ENCODE measurements at regions of chr15 and their contacts with region 1.

Region 1: DNA sequence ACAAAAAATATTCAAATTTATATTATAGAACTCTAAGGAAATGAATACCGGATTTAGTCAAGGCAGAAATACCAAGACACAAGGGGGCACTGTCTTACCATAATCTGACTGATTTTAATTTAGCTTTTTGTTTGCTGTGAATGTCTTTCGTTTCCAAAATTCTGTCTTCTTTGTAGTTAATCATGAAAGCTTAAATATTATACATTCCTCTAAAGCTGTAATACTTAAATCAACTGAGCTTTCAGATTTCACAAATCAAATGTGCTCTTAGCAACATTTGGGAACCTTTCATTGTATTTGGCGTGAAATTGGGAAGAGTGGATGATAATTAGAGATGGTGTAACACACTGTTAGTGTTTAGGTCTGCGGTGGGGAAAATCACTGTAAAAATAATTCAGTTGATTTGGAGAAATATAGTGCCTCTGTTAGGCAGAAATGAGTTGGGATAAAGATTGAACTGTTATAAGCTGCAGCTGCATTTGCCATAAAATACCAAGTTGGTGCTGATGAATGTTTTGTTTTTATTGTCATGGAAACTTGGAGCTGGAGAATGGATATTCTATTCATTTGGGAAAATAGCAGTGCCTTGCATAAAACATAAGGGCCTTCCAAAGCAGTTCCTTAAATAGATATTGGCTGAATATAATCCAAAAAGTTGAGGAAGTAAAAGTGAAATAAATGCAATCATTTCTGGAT is 228.2 kb downstream of the TCF12 start:
- DNase-seq: peak; percentile 18
- CTCF ChIP-seq: peak; percentile 61

Region 2: DNA sequence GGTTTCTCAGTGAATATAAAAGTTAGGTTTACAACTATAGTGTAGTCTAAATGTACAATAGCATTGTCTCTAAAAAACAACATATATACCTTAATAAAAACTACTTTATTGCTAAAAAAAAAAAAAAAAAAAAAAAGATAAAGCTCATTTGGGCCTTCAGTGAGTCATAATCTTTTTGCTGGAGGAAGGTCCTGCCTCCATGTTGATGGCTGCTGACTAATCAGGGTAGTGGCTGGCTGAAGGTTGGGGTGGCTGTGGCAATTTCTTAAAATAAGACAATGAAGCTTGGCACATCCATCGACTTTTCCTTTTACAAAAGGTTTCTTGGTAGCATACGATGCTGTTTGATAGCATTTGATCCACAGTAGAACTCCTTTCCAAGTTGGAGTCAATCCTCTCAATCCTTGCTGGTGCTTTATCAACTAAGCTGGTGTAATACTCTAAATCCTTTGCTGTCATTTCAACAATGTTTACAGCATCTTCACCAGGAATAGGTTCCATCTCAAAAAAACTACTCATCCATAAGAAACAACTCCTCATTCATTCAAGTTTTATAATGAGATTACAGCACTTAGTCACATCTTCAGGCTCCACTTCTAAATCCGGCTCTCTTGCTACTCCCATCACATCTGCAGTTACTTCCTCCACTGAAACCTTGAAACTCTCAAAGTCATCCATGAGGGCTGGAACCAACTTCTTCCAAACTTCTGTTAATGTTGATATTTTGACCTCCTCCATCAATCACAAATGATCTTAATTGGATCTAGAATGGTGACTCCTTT is 426.7 kb before region 1 on chr15:
- CTCF ChIA-PET with region 1: no interaction called
- POLR2A ChIA-PET with region 1: no interaction called
- DNase-seq: no peak
- CTCF ChIP-seq: no peak

Region 3: GRCh38 chr15:57037548-57037947 is 109.1 kb before region 1 on chr15:
- CTCF ChIA-PET with region 1: no interaction called
- POLR2A ChIA-PET with region 1: no interaction called
- DNase-seq: peak; percentile 16
- CTCF ChIP-seq: no peak

Region 4: GRCh38 chr15:57133127-57133968 is 13.3 kb before region 1 on chr15:
- CTCF ChIA-PET with region 1: interaction called, 55 read pairs
- POLR2A ChIA-PET with region 1: no interaction called
- DNase-seq: peak; percentile 41
- CTCF ChIP-seq: no peak

Region 5: GRCh38 chr15:57172925-57173324 is 26.3 kb after region 1 on chr15:
- CTCF ChIA-PET with region 1: interaction called, 14 read pairs
- POLR2A ChIA-PET with region 1: no interaction called
- DNase-seq: no peak
- CTCF ChIP-seq: no peak

Region 6: GRCh38 chr15:57306161-57306943 is 159.7 kb after region 1 on chr15:
- CTCF ChIA-PET with region 1: interaction called, 163 read pairs
- POLR2A ChIA-PET with region 1: no interaction called
- DNase-seq: peak; percentile 90
- CTCF ChIP-seq: peak; percentile 95

Region 7: DNA sequence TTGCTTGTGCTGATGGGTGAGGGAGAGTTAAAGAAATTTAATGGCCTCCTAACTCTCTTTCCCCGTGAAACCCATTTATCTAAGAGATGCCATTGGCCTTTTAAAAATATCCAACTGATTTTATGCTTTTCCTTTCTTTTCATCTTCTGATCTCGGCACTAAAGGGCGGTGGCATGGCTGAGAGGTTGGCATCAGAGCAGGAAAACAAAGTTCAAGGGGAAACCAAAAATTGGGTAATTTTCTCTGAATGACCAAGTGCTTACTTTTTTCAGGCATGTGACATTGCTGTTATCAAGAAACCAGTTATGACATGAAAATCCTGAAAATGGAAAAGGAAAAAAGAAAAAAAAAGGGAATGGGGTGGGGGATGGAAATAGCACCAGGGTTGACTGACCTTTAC is 232.8 kb after region 1 on chr15:
- CTCF ChIA-PET with region 1: no interaction called
- POLR2A ChIA-PET with region 1: no interaction called
- DNase-seq: no peak
- CTCF ChIP-seq: no peak

Region 8: GRCh38 chr15:57527382-57528091 is 380.9 kb after region 1 on chr15:
- CTCF ChIA-PET with region 1: interaction called, 40 read pairs
- POLR2A ChIA-PET with region 1: no interaction called
- DNase-seq: peak; percentile 58
- CTCF ChIP-seq: peak; percentile 43

Measured in GM10248 (cell line).